Tibial artery (tissue), 4 donors: ENCODE measurements at regions of chr16 and their contacts with region 1.

Region 1: GRCh38 chr16:31440516-31441184 is 1.9 kb downstream of the ZNF843 start:
- DNase-seq: peak in 1 of 2 donors; percentile 31
- H3K4me3 ChIP-seq: no peak overlapping the region
- H3K27ac ChIP-seq: no peak overlapping the region
- H3K4me1 ChIP-seq: peaks cover 0 to 11% (median 3%) of the 10 kb centered on the region in 4 donors
- H3K27me3 ChIP-seq: no peaks in the 10 kb centered on the region
- CTCF ChIP-seq: no peak

Region 2: GRCh38 chr16:31194898-31195297 is 245.8 kb before region 1 on chr16:
- intact Hi-C with region 1: loop called (anchors 5 kb)
- DNase-seq: no peak
- H3K4me3 ChIP-seq: no peak overlapping the region
- H3K27ac ChIP-seq: no peak overlapping the region
- H3K4me1 ChIP-seq: no peaks in the 10 kb centered on the region
- H3K27me3 ChIP-seq: no peaks in the 10 kb centered on the region
- CTCF ChIP-seq: no peak

Region 3: GRCh38 chr16:31297496-31297895 is 143.2 kb before region 1 on chr16:
- intact Hi-C with region 1: no loop called
- DNase-seq: no peak
- H3K4me3 ChIP-seq: no peak overlapping the region
- H3K27ac ChIP-seq: no peak overlapping the region
- H3K4me1 ChIP-seq: peaks cover 0 to 8% (median 0%) of the 10 kb centered on the region in 4 donors
- H3K27me3 ChIP-seq: peaks cover 0 to 4% of the 10 kb centered on the region in 2 donors
- CTCF ChIP-seq: no peak